Mammary epithelial cell (primary cell): ENCODE measurements at regions of chr5 and their contacts with region 1.

Region 1: GRCh38 chr5:180670586-180671359 is 21.4 kb upstream of the FLT4 start:
- DNase-seq: peak; percentile 13
- H3K4me3 ChIP-seq: no peak overlapping the region
- H3K27ac ChIP-seq: no peak overlapping the region
- H3K4me1 ChIP-seq: no peaks in the 10 kb centered on the region
- H3K27me3 ChIP-seq: peaks cover 9% of the 10 kb centered on the region
- CTCF ChIP-seq: peak; percentile 62 to 74

Region 2: DNA sequence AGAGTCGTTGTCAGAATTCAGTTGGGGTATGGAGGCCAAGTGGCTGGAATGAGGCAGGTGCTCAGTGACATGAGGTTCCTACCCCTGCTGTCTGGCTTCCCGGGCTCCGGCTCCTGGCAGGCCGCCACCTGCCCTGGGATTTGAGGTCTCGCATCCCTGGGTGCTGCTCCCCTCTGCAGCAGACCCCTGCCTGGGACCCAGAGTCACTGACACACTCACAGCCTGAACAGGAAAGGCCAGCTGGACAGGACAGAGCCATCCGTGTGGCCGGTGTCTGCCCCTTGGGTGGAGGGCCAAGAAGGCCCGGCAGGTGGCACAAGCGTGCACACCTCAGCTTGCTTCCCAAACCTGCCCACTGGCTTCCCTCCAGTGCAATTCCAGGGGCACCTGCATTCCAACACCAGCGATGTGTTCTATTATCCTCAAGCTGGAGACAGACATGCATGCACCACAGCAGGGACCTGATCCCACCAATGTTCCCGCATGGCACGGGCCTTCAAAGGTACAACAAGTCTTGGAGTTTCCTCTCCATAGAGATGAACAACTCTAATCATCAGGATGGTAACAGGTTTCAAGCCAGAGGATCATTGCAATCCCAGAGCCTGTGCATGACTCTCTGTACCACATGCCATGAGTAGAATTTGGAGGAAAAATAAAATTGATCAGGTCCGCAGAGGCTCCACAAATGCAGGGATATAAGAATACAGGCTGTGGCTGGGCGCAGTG is 553.6 kb before region 1 on chr5:
- CTCF ChIA-PET with region 1: no interaction called
- dilution Hi-C with region 1: no loop called
- in situ Hi-C with region 1: no loop called
- intact Hi-C with region 1: loop called (anchors 5 kb)
- DNase-seq: peak; percentile 12
- H3K4me3 ChIP-seq: no peak overlapping the region
- H3K27ac ChIP-seq: no peak overlapping the region
- H3K4me1 ChIP-seq: no peaks in the 10 kb centered on the region
- H3K27me3 ChIP-seq: no peaks in the 10 kb centered on the region
- CTCF ChIP-seq: peak; percentile 39 to 71

Region 3: GRCh38 chr5:180718810-180719453 is 48.2 kb after region 1 on chr5:
- CTCF ChIA-PET with region 1: no interaction called
- dilution Hi-C with region 1: no loop called
- in situ Hi-C with region 1: no loop called
- intact Hi-C with region 1: no loop called
- DNase-seq: peak; percentile 16
- H3K4me3 ChIP-seq: no peak overlapping the region
- H3K27ac ChIP-seq: no peak overlapping the region
- H3K4me1 ChIP-seq: no peaks in the 10 kb centered on the region
- H3K27me3 ChIP-seq: no peaks in the 10 kb centered on the region
- CTCF ChIP-seq: peak; percentile 67 to 72